ENCODE measurements at regions of chr17 and their contacts with region 1.

Region 1: DNA sequence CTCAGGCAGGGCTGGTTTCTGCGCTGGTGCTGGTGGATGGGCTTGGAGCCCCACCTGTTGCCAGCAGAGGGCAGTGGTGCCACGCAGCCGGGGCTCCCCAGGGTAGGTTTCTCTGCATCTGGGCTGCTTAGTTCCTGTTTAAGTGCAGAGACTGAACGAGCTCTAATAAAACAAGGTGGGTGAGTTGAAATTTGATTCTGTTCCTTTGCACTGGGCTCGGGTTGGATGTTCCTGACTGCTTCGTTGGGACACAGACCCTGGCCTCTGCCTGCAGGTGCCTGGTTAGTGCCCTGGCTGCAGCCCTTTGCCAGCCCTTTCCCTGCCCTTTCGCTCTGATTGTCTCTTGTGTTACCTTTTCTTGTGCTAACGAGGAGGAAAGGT is 30.0 kb downstream of the TBCD start:
- DNase-seq: peak; percentile 90
- ATAC-seq: peak; percentile 100
- H3K4me3 Mint-ChIP-seq: no peak overlapping the region
- H3K27ac Mint-ChIP-seq: peak overlapping the region; percentile 48
- H3K4me1 Mint-ChIP-seq: peaks cover 24% of the 10 kb centered on the region
- H3K27me3 Mint-ChIP-seq: no peaks in the 10 kb centered on the region

Region 2: GRCh38 chr17:82863941-82864774 is 82.3 kb after region 1 on chr17:
- CTCF ChIA-PET with region 1: interaction called, 15 read pairs
- POLR2A ChIA-PET with region 1: interaction called, 3 read pairs
- DNase-seq: peak; percentile 96
- ATAC-seq: peak; percentile 94
- H3K4me3 Mint-ChIP-seq: peak overlapping the region; percentile 78
- H3K27ac Mint-ChIP-seq: peak overlapping the region; percentile 98
- H3K4me1 Mint-ChIP-seq: peaks cover 74% of the 10 kb centered on the region
- H3K27me3 Mint-ChIP-seq: no peaks in the 10 kb centered on the region

Region 3: DNA sequence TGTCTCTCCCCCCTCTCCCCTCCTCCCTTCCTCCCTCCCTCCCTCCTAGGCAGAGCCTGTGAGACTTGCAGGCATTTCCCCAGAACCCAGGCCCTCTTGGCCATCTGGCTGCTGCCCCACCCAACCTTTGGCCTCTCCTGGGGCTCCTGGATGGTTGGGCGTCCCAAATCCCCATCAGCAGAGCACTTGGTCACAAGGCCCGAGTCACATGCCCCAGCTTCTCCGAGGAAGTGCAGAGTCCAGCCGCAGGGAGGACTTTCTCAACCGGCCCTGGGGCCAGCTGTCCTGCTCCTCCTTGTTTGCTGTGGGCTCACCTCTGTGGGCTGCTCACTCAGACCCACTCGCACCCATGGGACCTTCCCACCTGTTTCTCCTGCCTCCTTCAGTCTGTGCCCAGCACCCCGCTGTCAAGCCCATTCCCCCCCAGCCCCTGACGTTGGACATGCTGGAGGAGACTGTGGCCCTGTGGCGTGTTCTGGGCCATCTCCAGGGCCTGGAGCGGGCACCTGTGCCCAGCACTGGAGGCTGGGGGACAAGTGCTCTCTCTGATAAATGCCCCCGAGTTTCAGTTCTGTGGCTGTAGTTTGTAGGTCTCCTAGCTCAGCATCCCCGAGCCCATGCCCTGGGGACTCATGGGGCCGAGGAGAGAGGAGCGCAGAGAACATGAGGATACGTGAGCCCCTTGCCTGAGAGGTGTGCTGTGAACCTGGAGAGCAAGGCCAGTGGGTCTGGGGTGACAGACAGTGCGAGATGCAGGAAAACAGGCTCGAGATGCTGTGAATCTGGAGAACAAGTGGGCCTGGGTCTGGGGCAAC is 100.2 kb after region 1 on chr17:
- CTCF ChIA-PET with region 1: interaction called, 14 read pairs
- POLR2A ChIA-PET with region 1: no interaction called
- DNase-seq: no peak
- ATAC-seq: no peak
- H3K4me3 Mint-ChIP-seq: peak overlapping the region; percentile 74
- H3K27ac Mint-ChIP-seq: peak overlapping the region; percentile 95
- H3K4me1 Mint-ChIP-seq: peaks cover 93% of the 10 kb centered on the region
- H3K27me3 Mint-ChIP-seq: no peaks in the 10 kb centered on the region

Region 4: GRCh38 chr17:82917691-82918345 is 135.9 kb after region 1 on chr17:
- CTCF ChIA-PET with region 1: interaction called, 25 read pairs
- POLR2A ChIA-PET with region 1: no interaction called
- DNase-seq: peak; percentile 62
- ATAC-seq: peak; percentile 63
- H3K4me3 Mint-ChIP-seq: no peak overlapping the region
- H3K27ac Mint-ChIP-seq: no peak overlapping the region
- H3K4me1 Mint-ChIP-seq: peaks cover 15% of the 10 kb centered on the region
- H3K27me3 Mint-ChIP-seq: no peaks in the 10 kb centered on the region

Region 5: GRCh38 chr17:83200202-83200699 is 418.4 kb after region 1 on chr17:
- CTCF ChIA-PET with region 1: interaction called, 17 read pairs
- POLR2A ChIA-PET with region 1: no interaction called
- DNase-seq: peak; percentile 81
- ATAC-seq: peak; percentile 75
- H3K4me3 Mint-ChIP-seq: peak overlapping the region; percentile 76
- H3K27ac Mint-ChIP-seq: peak overlapping the region; percentile 100
- H3K4me1 Mint-ChIP-seq: peaks cover 61% of the 10 kb centered on the region
- H3K27me3 Mint-ChIP-seq: peaks cover 2% of the 10 kb centered on the region